Esophagus muscularis mucosa (tissue), 4 donors: ENCODE measurements at regions of chr12 and their contacts with region 1.

Region 1: DNA sequence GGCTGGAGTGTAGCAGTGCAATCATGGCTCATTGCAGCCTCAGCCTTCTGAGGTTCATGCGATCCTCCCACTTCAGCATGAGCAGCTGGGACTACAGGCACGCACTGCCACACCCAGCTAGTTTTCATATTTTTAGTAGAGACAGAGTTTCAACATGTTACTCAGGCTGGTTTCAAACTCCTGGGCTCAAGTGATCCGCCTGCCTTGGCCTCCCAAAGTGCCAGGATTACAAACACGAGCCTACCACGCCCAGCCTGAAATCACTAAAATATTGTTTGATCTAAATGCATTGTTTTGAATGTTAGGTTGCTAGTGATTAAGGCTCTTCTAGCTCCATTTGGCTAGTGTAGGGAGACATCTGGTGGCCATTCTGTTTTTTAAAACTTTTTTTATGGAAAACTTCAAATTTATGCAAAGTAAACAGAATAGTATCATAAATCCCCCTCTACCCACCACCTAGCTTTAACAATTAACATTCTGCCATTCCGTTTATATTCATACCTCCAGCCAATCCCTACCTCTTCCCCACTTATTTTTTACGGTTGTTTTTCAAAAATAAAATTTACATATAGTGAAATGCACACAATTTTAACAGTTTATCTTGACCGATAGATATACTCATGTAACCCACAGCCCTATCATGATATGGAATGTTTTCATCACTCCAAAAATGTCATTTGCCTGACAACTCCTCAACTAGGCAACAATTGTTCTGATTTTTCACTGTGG is 37.8 kb downstream of the MYO1H start:
- DNase-seq: no peak
- H3K4me3 ChIP-seq: no peak overlapping the region
- H3K27ac ChIP-seq: peak overlapping the region in 2 of 4 donors; percentile 1 to 8
- H3K4me1 ChIP-seq: peaks cover 0 to 23% (median 18%) of the 10 kb centered on the region in 4 donors
- H3K27me3 ChIP-seq: no peaks in the 10 kb centered on the region
- CTCF ChIP-seq: peak; percentile 43 to 58 (median 53)
- EP300 ChIP-seq: no peak
- POLR2A ChIP-seq: no peak

Region 2: DNA sequence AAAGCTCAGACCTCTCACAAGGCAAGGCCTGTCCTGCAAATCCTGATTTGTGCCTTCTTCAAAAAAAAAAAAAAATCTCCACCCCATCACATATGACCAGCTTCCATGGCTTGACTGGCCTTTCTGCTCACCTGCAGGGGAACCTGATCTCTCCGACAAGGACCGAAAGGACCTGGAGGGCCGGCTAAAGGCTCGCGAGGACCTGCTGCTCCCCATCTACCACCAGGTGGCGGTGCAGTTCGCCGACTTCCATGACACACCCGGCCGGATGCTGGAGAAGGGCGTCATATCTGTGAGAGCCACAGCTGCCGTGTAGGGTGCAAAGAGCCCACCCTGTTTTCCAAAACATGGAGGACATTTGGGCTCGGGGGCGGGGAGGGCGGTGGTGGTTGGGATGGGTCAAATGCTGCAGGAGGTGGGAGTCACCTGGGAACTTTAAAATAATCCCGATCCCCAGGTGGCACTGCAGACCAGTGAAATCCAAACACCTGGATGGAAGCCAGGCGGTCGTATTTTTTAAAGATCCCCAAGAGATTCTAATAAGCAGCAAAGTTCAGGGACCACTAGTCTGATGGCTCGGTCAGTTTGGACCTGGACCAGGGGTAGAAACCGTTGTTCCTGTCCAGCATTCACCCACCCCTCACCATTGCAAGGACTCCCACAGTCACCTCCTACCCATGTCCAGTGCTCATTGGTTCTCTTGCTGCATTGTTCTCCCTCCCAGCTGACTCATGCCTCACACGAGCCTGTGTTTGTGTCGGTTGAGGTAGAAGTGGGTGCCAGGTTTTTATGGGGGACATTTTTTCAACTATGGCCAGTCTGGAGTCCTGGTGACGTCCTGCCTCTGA is 121.2 kb before region 1 on chr12:
- intact Hi-C with region 1: loop called (anchors 1 kb)
- DNase-seq: no peak
- H3K4me3 ChIP-seq: no peak overlapping the region
- H3K27ac ChIP-seq: peak overlapping the region; percentile 31 to 68 (median 44)
- H3K4me1 ChIP-seq: peaks cover 0 to 18% (median 12%) of the 10 kb centered on the region in 4 donors
- H3K27me3 ChIP-seq: no peaks in the 10 kb centered on the region
- CTCF ChIP-seq: peak; percentile 84 to 89 (median 85)
- EP300 ChIP-seq: no peak
- POLR2A ChIP-seq: no peak

Region 3: DNA sequence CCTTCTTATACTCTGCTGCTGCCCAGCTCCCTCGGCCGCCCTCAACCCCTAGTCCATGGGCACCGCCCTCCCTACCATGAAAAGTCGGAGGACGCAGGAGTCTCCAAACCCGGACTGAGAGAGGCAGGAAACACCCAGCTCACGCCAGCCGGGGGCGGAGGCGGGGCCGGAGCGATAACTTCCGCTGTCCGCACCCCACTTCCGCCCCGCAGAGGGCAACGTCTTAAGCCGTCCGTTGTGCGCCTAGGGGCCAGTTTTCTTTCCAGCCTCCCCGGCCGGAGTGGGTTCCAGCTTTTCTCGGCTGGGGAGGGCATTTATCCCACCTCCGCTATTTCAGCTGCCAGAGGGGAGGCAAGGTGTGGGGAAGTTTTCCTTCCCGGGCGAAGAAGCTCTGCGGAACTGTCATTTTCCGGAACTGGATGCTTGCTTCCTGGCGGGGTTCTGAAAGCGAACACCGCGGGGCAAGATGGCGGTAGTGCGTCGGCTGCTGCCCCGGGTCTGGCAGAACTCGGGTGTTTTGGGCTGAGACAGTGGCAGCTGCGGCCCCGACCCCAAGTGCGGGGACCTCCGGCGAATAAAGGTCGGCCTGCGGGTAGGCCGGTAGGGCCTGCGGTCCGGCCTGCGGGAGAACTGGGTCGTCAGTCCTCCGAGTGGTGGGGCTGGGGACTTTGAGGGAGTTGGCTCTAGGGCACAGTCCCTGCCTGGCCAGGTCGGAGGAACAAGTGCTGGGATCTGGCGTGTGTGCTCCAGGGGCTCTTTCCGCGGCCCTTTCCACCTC is 91.9 kb after region 1 on chr12 and contains the starts of genes KCTD10 and UBE3B:
- intact Hi-C with region 1: no loop called
- DNase-seq: peak; percentile 97
- H3K4me3 ChIP-seq: peak within 1 kb of the TSS; percentile 78 to 95 (median 85)
- H3K27ac ChIP-seq: peak within 1 kb of the TSS; percentile 93 to 99 (median 96)
- H3K4me1 ChIP-seq: peaks cover 45 to 69% (median 62%) of the 10 kb centered on the region in 4 donors
- H3K27me3 ChIP-seq: no peaks in the 10 kb centered on the region
- CTCF ChIP-seq: peak in 1 of 3 experiments; percentile 29
- EP300 ChIP-seq: no peak
- POLR2A ChIP-seq: peak; percentile 41
- total RNA-seq, gene KCTD10: 90.7 to 115 (median 104) TPM
- total RNA-seq, gene UBE3B: 42.4 to 59.2 (median 49.1) TPM